ENCODE measurements at regions of chr2 and their contacts with region 1.

Region 1: DNA sequence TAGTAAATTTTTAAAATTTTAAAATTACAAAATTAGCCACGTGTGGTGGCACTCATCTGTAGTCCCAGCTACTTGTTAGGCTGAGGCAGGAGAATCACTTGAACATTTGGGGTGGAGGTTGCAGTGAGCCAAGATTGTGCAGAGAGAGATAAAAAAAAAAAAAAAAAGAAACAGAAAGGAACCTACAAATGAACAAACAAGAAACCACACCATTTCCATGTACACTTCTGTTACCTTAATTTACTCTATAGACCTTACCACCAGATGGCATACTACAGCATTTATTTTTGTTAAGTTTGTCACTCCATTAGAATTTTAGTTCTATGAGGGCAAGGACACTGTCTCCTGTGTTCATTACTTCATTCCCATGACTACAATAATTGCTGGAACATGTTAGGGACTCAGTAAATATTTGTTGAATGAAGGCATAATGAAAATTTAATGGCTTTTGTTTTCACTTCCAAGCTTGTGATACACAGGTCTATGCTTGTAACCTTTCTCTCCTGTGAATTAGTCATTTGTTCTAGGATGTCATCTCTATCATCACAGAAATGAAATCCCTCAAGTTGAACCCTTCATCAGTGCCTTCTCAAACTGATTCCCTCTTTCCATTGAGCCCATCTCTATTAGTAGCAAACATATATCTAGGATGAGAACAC is 76.0 kb downstream of the ARHGAP15 start:
- DNase-seq: no peak
- ATAC-seq: peak; percentile 42
- H3K4me3 Mint-ChIP-seq: no peak overlapping the region
- H3K27ac Mint-ChIP-seq: peak overlapping the region; percentile 26
- H3K4me1 Mint-ChIP-seq: peaks cover 28% of the 10 kb centered on the region
- H3K27me3 Mint-ChIP-seq: no peaks in the 10 kb centered on the region
- CTCF ChIP-seq: no peak

Region 2: GRCh38 chr2:143183804-143184463 is 21.3 kb before region 1 on chr2:
- CTCF ChIA-PET with region 1: no interaction called
- POLR2A ChIA-PET with region 1: no interaction called
- intact Hi-C with region 1: loop called (anchors 2 kb)
- DNase-seq: no peak
- ATAC-seq: peak; percentile 47
- H3K4me3 Mint-ChIP-seq: peak overlapping the region; percentile 8
- H3K27ac Mint-ChIP-seq: no peak overlapping the region
- H3K4me1 Mint-ChIP-seq: peaks cover 48% of the 10 kb centered on the region
- H3K27me3 Mint-ChIP-seq: no peaks in the 10 kb centered on the region
- CTCF ChIP-seq: no peak

Measured in activated B cell treated with CpG ODN at 0.5 μM for 24 hours (primary cell).